Caco-2 (cell line): ENCODE measurements at regions of chr6 and their contacts with region 1.

Region 1: GRCh38 chr6:69796642-69797390 is at the start of gene LMBRD1:
- DNase-seq: peak; percentile 96 to 98
- H3K4me3 ChIP-seq: peak within 1 kb of the TSS; percentile 79
- H3K4me3 Mint-ChIP-seq: peak within 1 kb of the TSS; percentile 98
- H3K27ac Mint-ChIP-seq: peak within 1 kb of the TSS; percentile 98
- H3K4me1 ChIP-seq: peaks cover 4% of the 10 kb centered on the region; the same call in 1 of the 2 replicates
- H3K4me1 Mint-ChIP-seq: peaks cover 15% of the 10 kb centered on the region
- H3K27me3 ChIP-seq: no peaks in the 10 kb centered on the region
- H3K27me3 Mint-ChIP-seq: no peaks in the 10 kb centered on the region
- CTCF ChIP-seq: peak; percentile 91 to 98
- total RNA-seq, gene LMBRD1: 25.0 and 27.5 TPM in 2 replicates

Region 2: GRCh38 chr6:68634726-68635411 is 1161.9 kb before region 1 on chr6 and contains the start of gene ADGRB3:
- CTCF ChIA-PET with region 1: no interaction called
- POLR2A ChIA-PET with region 1: no interaction called
- intact Hi-C with region 1: no loop called
- DNase-seq: peak; percentile 58 to 67
- H3K4me3 ChIP-seq: peak within 1 kb of the TSS; percentile 51
- H3K4me3 Mint-ChIP-seq: peak within 1 kb of the TSS; percentile 82
- H3K27ac Mint-ChIP-seq: no peak within 1 kb of the TSS
- H3K4me1 ChIP-seq: no peaks in the 10 kb centered on the region; the same call in 1 of the 2 replicates
- H3K4me1 Mint-ChIP-seq: peaks cover 9% of the 10 kb centered on the region
- H3K27me3 ChIP-seq: no peaks in the 10 kb centered on the region; the same call in 1 of the 2 replicates
- H3K27me3 Mint-ChIP-seq: peaks cover 31% of the 10 kb centered on the region
- CTCF ChIP-seq: peak in 1 of 2 experiments; percentile 21
- total RNA-seq, gene ADGRB3: 0.18 TPM in 1 of 2 replicates, not detected in the other

Region 3: GRCh38 chr6:69785697-69786096 is 11.1 kb before region 1 on chr6:
- CTCF ChIA-PET with region 1: interaction called, 13 read pairs
- POLR2A ChIA-PET with region 1: no interaction called
- intact Hi-C with region 1: no loop called
- DNase-seq: no peak
- H3K4me3 ChIP-seq: no peak overlapping the region
- H3K4me3 Mint-ChIP-seq: no peak overlapping the region
- H3K27ac Mint-ChIP-seq: no peak overlapping the region
- H3K4me1 ChIP-seq: peaks cover 11% of the 10 kb centered on the region
- H3K4me1 Mint-ChIP-seq: peaks cover 3% of the 10 kb centered on the region
- H3K27me3 ChIP-seq: no peaks in the 10 kb centered on the region
- H3K27me3 Mint-ChIP-seq: no peaks in the 10 kb centered on the region
- CTCF ChIP-seq: no peak

Region 4: DNA sequence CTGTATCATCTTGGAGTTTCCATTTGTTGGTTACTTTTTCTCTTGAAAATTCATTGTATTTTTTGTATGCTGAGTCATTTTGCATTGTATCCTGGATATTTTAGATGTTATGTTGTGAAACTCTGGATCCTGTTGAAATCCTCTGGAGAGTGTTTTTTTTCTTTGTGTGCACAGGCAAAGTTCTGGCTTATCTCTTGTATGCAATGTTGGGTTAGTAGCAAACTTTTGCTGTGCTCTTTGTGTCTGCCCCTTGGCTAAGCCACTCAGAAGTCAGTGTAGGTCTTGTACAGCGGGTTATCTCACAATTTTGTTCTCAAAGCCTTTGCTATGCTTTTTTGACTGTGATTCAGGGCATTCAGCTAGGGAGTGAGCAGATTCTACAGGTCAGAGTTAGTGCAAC is 29.1 kb after region 1 on chr6:
- CTCF ChIA-PET with region 1: no interaction called
- POLR2A ChIA-PET with region 1: interaction called, 3 read pairs
- intact Hi-C with region 1: loop called (anchors 1 kb)
- DNase-seq: peak in 1 of 2 experiments; percentile 33
- H3K4me3 ChIP-seq: no peak overlapping the region
- H3K4me3 Mint-ChIP-seq: peak overlapping the region; percentile 45
- H3K27ac Mint-ChIP-seq: no peak overlapping the region
- H3K4me1 ChIP-seq: peaks cover 4% of the 10 kb centered on the region; the same call in 1 of the 2 replicates
- H3K4me1 Mint-ChIP-seq: no peaks in the 10 kb centered on the region
- H3K27me3 ChIP-seq: no peaks in the 10 kb centered on the region
- H3K27me3 Mint-ChIP-seq: no peaks in the 10 kb centered on the region
- CTCF ChIP-seq: no peak

Region 5: GRCh38 chr6:69900892-69901291 is 104.1 kb after region 1 on chr6:
- CTCF ChIA-PET with region 1: no interaction called
- POLR2A ChIA-PET with region 1: no interaction called
- intact Hi-C with region 1: no loop called
- DNase-seq: no peak
- H3K4me3 ChIP-seq: no peak overlapping the region
- H3K4me3 Mint-ChIP-seq: no peak overlapping the region
- H3K27ac Mint-ChIP-seq: no peak overlapping the region
- H3K4me1 ChIP-seq: no peaks in the 10 kb centered on the region
- H3K4me1 Mint-ChIP-seq: no peaks in the 10 kb centered on the region
- H3K27me3 ChIP-seq: no peaks in the 10 kb centered on the region
- H3K27me3 Mint-ChIP-seq: no peaks in the 10 kb centered on the region
- CTCF ChIP-seq: no peak

Region 6: DNA sequence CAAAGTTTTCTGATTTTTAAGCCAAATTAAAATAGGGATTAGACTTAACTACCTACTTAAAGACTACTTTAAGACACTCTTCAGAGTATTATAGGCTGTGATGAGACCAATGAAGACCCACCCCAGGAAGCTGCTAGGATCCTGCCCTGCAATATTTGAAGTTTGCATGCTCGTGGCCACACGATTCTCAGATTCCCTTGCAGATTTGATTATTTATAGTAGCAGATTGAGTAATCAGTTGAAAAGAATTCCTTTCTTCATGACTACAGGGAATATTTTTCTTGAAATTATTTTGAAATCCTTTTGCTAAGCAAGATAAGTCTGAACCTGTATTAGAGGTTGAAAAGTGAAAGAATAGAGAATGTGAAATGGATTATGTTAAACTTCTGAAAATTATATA is 1037.7 kb after region 1 on chr6:
- CTCF ChIA-PET with region 1: no interaction called
- POLR2A ChIA-PET with region 1: no interaction called
- intact Hi-C with region 1: no loop called
- DNase-seq: no peak
- H3K4me3 ChIP-seq: no peak overlapping the region
- H3K4me3 Mint-ChIP-seq: no peak overlapping the region
- H3K27ac Mint-ChIP-seq: no peak overlapping the region
- H3K4me1 ChIP-seq: no peaks in the 10 kb centered on the region
- H3K4me1 Mint-ChIP-seq: peaks cover 5% of the 10 kb centered on the region
- H3K27me3 ChIP-seq: no peaks in the 10 kb centered on the region
- H3K27me3 Mint-ChIP-seq: no peaks in the 10 kb centered on the region
- CTCF ChIP-seq: no peak